Head of caudate nucleus (tissue), 42 donors: ENCODE measurements at regions of chr2 and their contacts with region 1.

Region 1: GRCh38 chr2:128321784-128322714 is 3.4 kb upstream of the HS6ST1 start:
- DNase-seq: peak; percentile 80 to 95 (median 90)

Region 2: DNA sequence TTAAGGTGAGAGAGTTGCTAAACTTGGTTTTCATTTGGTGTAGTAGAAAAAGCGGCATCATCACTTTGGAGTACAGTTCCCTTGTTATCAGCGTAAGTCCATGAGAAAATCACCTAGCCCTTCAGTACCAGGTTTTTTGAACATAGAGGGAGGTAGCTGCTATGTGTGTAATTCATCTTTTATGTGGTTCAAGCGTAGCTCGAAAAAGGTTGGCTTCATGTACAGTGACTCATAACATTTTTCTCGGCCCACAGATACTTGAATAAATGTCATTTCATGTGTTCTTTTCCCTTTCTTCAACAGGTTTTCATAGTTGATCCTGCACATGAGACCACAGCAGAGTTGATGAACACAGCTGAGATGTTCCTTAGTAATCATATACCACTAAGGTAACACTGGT is 187.5 kb before region 1 on chr2:
- intact Hi-C with region 1: no loop called
- DNase-seq: no peak

Region 3: GRCh38 chr2:128178650-128179460 is 143.2 kb before region 1 on chr2:
- intact Hi-C with region 1: loop called (anchors 5 kb)
- DNase-seq: peak; percentile 23 to 88 (median 72)

Region 4: GRCh38 chr2:128232965-128233789 is 88.9 kb before region 1 on chr2:
- intact Hi-C with region 1: loop called (anchors 10 kb)
- DNase-seq: peak; percentile 74 to 95 (median 91)

Region 5: GRCh38 chr2:128379021-128380015 is 57.3 kb after region 1 on chr2:
- intact Hi-C with region 1: no loop called
- DNase-seq: peak in 3 of 42 donors; percentile 10 to 29 (median 15)

Region 6: GRCh38 chr2:128473175-128474035 is 151.4 kb after region 1 on chr2:
- intact Hi-C with region 1: no loop called
- DNase-seq: peak in 27 of 42 donors; percentile 7 to 66 (median 28)

Region 7: DNA sequence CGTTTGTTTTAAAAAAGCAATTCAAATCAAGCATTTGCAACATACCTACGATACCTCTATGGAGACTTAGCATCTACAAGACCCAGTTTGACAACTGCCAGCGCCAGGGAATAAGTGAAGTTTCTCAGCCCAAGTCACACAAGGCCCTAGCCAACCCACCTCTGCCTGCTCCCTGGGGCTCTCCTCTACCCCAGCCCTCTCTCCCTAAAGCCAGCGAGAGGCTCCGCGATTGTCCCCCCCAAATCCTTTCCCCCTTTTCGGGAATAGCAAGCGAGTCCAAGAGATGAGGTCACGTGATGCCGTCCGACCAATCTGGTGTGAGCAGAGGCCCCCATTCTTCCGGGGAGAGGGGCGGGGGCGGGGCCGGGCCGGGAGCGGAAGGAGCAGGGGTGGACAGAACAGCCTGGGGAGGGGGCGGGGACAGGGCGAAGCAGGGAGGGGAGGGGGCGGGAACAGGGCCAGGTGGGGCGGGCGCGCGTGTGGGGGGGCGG is 1555.3 kb after region 1 on chr2:
- intact Hi-C with region 1: loop called (anchors 10 kb)
- DNase-seq: peak; percentile 91 to 98 (median 95)